ENCODE measurements at regions of chr4 and their contacts with region 1.

Region 1: GRCh38 chr4:168585168-168586091 is 88.6 kb downstream of the PALLD start:
- DNase-seq: peak; percentile 63 to 67
- H3K4me3 ChIP-seq: no peak overlapping the region
- H3K4me3 Mint-ChIP-seq: no peak overlapping the region
- H3K27ac Mint-ChIP-seq: no peak overlapping the region
- H3K4me1 ChIP-seq: no peaks in the 10 kb centered on the region
- H3K4me1 Mint-ChIP-seq: no peaks in the 10 kb centered on the region
- H3K27me3 ChIP-seq: no peaks in the 10 kb centered on the region
- H3K27me3 Mint-ChIP-seq: no peaks in the 10 kb centered on the region
- CTCF ChIP-seq: peak; percentile 52 to 62

Region 2: GRCh38 chr4:168631241-168632162 is 46.1 kb after region 1 on chr4:
- CTCF ChIA-PET with region 1: interaction called, 3 read pairs
- POLR2A ChIA-PET with region 1: no interaction called
- intact Hi-C with region 1: loop called (anchors 5 kb)
- DNase-seq: peak; percentile 56 to 69
- H3K4me3 ChIP-seq: peak overlapping the region; percentile 41
- H3K4me3 Mint-ChIP-seq: peak overlapping the region; percentile 75
- H3K27ac Mint-ChIP-seq: peak overlapping the region; percentile 34
- H3K4me1 ChIP-seq: no peaks in the 10 kb centered on the region
- H3K4me1 Mint-ChIP-seq: peaks cover 6% of the 10 kb centered on the region
- H3K27me3 ChIP-seq: peaks cover 2% of the 10 kb centered on the region; the same call in 1 of the 2 replicates
- H3K27me3 Mint-ChIP-seq: peaks cover 14% of the 10 kb centered on the region
- CTCF ChIP-seq: peak; percentile 14 to 34

Region 3: GRCh38 chr4:168917138-168917779 is 331.8 kb after region 1 on chr4:
- CTCF ChIA-PET with region 1: interaction called, 13 read pairs
- POLR2A ChIA-PET with region 1: no interaction called
- intact Hi-C with region 1: loop called (anchors 1 kb)
- DNase-seq: peak in 1 of 2 experiments; percentile 30
- H3K4me3 ChIP-seq: no peak overlapping the region
- H3K4me3 Mint-ChIP-seq: no peak overlapping the region
- H3K27ac Mint-ChIP-seq: no peak overlapping the region
- H3K4me1 ChIP-seq: no peaks in the 10 kb centered on the region
- H3K4me1 Mint-ChIP-seq: no peaks in the 10 kb centered on the region
- H3K27me3 ChIP-seq: no peaks in the 10 kb centered on the region
- H3K27me3 Mint-ChIP-seq: no peaks in the 10 kb centered on the region
- CTCF ChIP-seq: peak; percentile 37 to 55

Measured in Caco-2 (cell line).